ENCODE measurements at regions of chr11 and their contacts with region 1.

Region 1: GRCh38 chr11:103537904-103538502 is 428.8 kb downstream of the DYNC2H1 start:
- DNase-seq: peak; percentile 47
- ATAC-seq: peak; percentile 84
- H3K4me3 ChIP-seq: no peak overlapping the region
- H3K27ac ChIP-seq: no peak overlapping the region
- H3K4me1 ChIP-seq: no peaks in the 10 kb centered on the region
- H3K27me3 ChIP-seq: no peaks in the 10 kb centered on the region
- CTCF ChIP-seq: peak; percentile 62
- POLR2A ChIP-seq: no peak
- RAD21 ChIP-seq: peak; percentile 53

Region 2: DNA sequence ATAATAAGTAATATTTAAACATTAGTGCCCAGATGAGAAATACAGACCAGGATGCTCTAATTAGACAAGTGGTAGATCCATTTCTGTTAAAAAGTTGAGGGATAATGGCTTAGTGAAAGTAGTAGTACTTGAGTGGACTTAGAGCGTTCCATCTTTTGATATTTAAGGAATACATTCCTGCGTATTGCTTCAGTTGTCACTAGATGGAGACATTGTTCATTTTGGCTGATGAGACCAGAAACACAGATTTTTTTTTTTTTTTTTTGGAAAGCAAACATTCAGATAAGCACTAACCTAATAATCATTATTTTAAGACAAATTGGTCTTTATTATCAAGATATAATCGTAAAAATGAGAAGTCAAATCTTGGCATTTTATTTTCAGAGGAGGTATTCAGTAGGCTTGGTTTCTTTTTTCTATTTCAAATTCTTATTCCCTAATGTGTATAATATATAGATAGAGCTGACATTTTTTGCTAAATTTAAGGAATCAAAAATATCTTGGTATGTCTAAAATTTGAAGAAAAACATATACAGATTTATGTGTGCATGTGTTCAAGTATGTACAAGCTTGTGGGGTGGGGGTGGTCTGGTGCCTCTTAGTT is 335.9 kb before region 1 on chr11:
- CTCF ChIA-PET with region 1: no interaction called
- POLR2A ChIA-PET with region 1: no interaction called
- dilution Hi-C with region 1: no loop called
- in situ Hi-C with region 1: no loop called
- intact Hi-C with region 1: loop called (anchors 5 kb)
- DNase-seq: peak; percentile 63
- ATAC-seq: peak; percentile 60
- H3K4me3 ChIP-seq: no peak overlapping the region
- H3K27ac ChIP-seq: no peak overlapping the region
- H3K4me1 ChIP-seq: peaks cover 2% of the 10 kb centered on the region; the same call in 1 of the 2 replicates
- H3K27me3 ChIP-seq: no peaks in the 10 kb centered on the region
- CTCF ChIP-seq: peak; percentile 79
- POLR2A ChIP-seq: no peak
- RAD21 ChIP-seq: peak; percentile 74

Region 3: DNA sequence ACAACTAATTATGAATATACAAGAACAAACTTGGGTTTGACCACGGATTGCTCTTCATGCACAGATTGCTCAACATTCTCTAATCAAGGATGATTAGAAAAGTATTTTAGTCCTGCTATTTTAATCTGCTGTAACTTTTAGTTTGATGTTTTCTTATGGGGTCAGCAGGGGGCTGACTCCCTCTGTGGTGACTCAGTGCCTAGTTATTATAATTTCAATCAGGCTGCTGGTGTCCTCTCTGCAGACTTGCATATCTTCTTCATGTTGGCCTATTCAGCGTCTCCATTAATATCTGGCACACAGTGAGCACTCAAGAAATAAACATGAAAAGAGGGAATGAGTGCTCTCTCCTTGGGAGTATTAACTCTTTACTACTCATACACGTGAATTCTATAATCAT is 274.7 kb after region 1 on chr11:
- CTCF ChIA-PET with region 1: no interaction called
- POLR2A ChIA-PET with region 1: no interaction called
- dilution Hi-C with region 1: no loop called
- in situ Hi-C with region 1: no loop called
- intact Hi-C with region 1: no loop called
- DNase-seq: no peak
- ATAC-seq: peak; percentile 49
- H3K4me3 ChIP-seq: no peak overlapping the region
- H3K27ac ChIP-seq: no peak overlapping the region
- H3K4me1 ChIP-seq: peaks cover under 1% of the 10 kb centered on the region; the same call in 1 of the 2 replicates
- H3K27me3 ChIP-seq: no peaks in the 10 kb centered on the region
- CTCF ChIP-seq: 0 out of 2 replicates have a peak, but pooled peaks have one; percentile 3
- POLR2A ChIP-seq: no peak
- RAD21 ChIP-seq: no peak

Measured in IMR-90 (cell line).